PC-9 (cell line): ENCODE measurements at regions of chr17 and their contacts with region 1.

Region 1: DNA sequence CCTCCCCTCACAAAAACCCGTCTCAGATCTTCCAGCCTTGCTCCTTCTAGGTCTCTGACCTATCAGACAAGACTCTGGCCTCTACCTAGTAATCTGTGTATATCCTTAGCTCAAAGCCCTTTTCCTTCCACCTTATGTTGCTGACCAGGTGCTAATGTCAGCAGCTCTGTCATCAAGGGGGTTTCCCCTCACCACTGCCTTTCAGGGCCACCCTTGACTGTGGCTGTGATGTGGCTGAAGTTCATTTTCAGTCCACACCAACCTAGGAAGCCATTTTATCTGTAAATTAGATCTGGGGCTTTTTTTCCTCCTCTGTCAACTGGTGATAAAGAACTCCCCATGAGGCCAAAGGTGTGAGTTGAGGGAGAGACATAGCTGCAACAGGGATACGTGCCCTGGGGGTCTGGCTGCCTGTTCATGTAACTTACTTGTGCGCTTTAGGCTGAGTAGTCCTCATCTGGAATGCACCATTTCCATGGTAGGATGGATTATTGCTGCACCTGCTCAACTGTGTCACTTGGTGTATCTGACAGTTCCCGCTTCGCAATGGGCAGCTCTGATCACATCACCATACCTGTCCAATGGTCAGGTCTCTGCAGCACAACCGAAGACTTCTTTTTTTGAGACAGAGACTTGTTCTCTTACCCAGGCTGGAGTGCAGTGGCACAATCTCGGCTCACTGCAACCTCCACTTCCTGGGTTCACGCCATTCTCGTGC is 14.7 kb upstream of the RUNDC3A start:
- DNase-seq: no peak
- H3K4me3 ChIP-seq: no peak overlapping the region
- H3K27ac ChIP-seq: no peak overlapping the region
- H3K4me1 ChIP-seq: no peaks in the 10 kb centered on the region
- H3K27me3 ChIP-seq: peaks cover 15% of the 10 kb centered on the region; the same call in 1 of the 2 replicates
- CTCF ChIP-seq: no peak

Region 2: DNA sequence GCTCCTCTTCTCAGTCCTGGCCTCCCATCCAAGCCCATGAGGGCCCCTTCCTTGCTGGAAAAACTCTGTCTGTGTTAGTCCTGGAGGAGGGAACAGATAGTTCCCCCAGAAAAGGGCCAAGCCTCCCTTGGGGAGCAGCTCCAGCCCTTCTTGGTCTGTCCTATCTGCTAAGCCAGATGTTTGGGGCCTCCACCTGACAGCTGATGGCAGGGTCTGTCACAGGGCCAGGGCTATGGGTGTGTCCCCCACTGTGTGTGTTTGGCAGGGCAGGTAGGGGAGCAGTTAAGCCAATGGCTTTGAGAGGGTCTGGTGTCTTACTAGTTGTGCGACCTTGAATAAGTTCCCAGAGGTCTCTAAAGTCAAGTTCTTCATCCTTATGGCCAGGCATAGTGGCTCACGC is 12.1 kb before region 1 on chr17:
- CTCF ChIA-PET with region 1: no interaction called
- POLR2A ChIA-PET with region 1: interaction called, 10 read pairs
- intact Hi-C with region 1: no loop called
- DNase-seq: no peak
- H3K4me3 ChIP-seq: no peak overlapping the region
- H3K27ac ChIP-seq: no peak overlapping the region
- H3K4me1 ChIP-seq: 0 out of 2 replicates have a peak, but pooled peaks cover 5% of the 10 kb centered on the region
- H3K27me3 ChIP-seq: no peaks in the 10 kb centered on the region
- CTCF ChIP-seq: no peak